Activated CD4-positive, alpha-beta memory T cell treated with anti-CD3 and anti-CD28 coated beads for 36 hours (primary cell): ENCODE measurements at regions of chrX and their contacts with region 1.

Region 1: GRCh38 chrX:153885968-153886903 is at the start of gene L1CAM:
- DNase-seq: peak; percentile 40
- H3K4me3 Mint-ChIP-seq: peak within 1 kb of the TSS; percentile 43
- H3K27ac Mint-ChIP-seq: no peak within 1 kb of the TSS
- H3K4me1 Mint-ChIP-seq: no peaks in the 10 kb centered on the region
- H3K27me3 Mint-ChIP-seq: peaks cover 9% of the 10 kb centered on the region
- total RNA-seq, gene L1CAM: 0.45 to 1.3 TPM

Region 2: GRCh38 chrX:153763989-153764755 is 122.1 kb before region 1 on chrX and contains the start of gene PLXNB3:
- CTCF ChIA-PET with region 1: interaction called, 3 read pairs
- POLR2A ChIA-PET with region 1: no interaction called
- intact Hi-C with region 1: loop called (anchors 1 kb)
- DNase-seq: peak; percentile 84
- H3K4me3 Mint-ChIP-seq: no peak within 1 kb of the TSS
- H3K27ac Mint-ChIP-seq: no peak within 1 kb of the TSS
- H3K4me1 Mint-ChIP-seq: peaks cover 9% of the 10 kb centered on the region
- H3K27me3 Mint-ChIP-seq: no peaks in the 10 kb centered on the region
- total RNA-seq, gene PLXNB3: 0.29 to 0.69 TPM

Region 3: GRCh38 chrX:153794018-153794896 is 92.0 kb before region 1 on chrX and contains the starts of genes IDH3G and SSR4:
- CTCF ChIA-PET with region 1: no interaction called
- POLR2A ChIA-PET with region 1: no interaction called
- intact Hi-C with region 1: loop called (anchors 10 kb)
- DNase-seq: peak; percentile 95
- H3K4me3 Mint-ChIP-seq: peak within 1 kb of the TSS; percentile 90
- H3K27ac Mint-ChIP-seq: peak within 1 kb of the TSS; percentile 80
- H3K4me1 Mint-ChIP-seq: peaks cover 18% of the 10 kb centered on the region
- H3K27me3 Mint-ChIP-seq: no peaks in the 10 kb centered on the region
- total RNA-seq, gene IDH3G: 45.9 to 51.5 TPM
- total RNA-seq, gene SSR4: 194 to 203 TPM

Region 4: GRCh38 chrX:153829799-153830634 is 56.2 kb before region 1 on chrX and contains the start of gene PDZD4:
- CTCF ChIA-PET with region 1: no interaction called
- POLR2A ChIA-PET with region 1: no interaction called
- intact Hi-C with region 1: loop called (anchors 10 kb)
- DNase-seq: peak; percentile 26
- H3K4me3 Mint-ChIP-seq: peak within 1 kb of the TSS; percentile 56
- H3K27ac Mint-ChIP-seq: no peak within 1 kb of the TSS
- H3K4me1 Mint-ChIP-seq: peaks cover 14% of the 10 kb centered on the region
- H3K27me3 Mint-ChIP-seq: no peaks in the 10 kb centered on the region
- total RNA-seq, gene PDZD4: 4.9 to 5.7 TPM